ENCODE measurements at regions of chr15 and their contacts with region 1.

Region 1: DNA sequence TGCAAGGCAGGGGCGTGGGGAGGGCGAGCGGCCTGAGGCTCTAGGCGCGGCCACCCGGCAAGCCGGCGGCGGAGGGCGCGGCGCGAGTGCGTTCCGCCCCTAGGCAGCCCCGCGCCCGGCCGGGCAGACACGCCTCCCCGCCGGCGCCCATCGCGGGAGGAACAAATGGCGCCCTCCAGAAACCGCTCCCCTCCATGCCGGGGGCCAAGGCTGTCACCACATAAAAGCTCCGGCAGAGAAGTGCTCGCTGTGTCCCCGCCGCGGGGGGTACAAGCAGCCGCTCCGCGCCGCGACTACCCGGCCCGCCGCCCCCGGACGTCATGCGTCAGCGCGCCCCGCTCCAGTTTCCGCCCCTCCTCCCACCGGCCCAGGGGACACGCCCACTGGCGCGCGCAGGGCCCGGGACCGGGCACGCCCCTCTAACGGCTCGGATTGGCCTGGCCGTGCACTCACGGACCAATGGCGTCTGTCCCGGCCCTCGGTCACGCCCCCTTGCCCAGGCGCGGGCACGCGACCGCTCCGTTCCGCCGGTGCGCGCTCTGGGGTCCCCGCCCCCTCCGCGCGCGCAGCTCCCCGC is 391 bp upstream of the KLF13 start:
- DNase-seq: peak; percentile 97 to 100 (median 100)
- H3K4me3 ChIP-seq: peak overlapping the region in 1 of 2 donors; percentile 77
- H3K4me3 Mint-ChIP-seq: peak overlapping the region; percentile 53 to 90 (median 78)
- H3K27ac ChIP-seq: peak overlapping the region; percentile 92
- H3K27ac Mint-ChIP-seq: peak overlapping the region; percentile 64 to 92 (median 83)
- H3K4me1 ChIP-seq: peaks cover 43% of the 10 kb centered on the region
- H3K4me1 Mint-ChIP-seq: peaks cover 26 to 48% (median 37%) of the 10 kb centered on the region in 4 donors
- H3K27me3 ChIP-seq: no peaks in the 10 kb centered on the region
- H3K27me3 Mint-ChIP-seq: no peaks in the 10 kb centered on the region

Region 2: DNA sequence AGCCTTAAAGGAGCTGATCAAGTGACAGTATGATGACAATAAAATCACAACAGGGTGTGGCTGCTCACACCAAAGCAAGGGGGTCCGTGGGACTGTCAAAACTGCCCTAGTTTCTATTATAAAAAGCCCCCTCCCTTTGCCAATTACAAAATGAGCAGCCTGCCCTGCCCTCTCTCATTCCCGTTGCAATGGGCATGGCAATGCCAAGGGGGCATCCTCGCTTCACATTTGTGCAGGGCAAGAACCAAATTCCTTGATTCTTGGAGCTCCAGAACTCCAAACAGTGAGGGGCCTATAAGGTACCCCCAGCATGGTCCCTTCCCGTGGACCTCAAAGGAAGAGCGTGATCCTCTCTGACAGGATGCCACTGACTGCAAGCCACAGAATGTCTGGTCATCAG is 119.9 kb before region 1 on chr15:
- CTCF ChIA-PET with region 1: interaction called, 10 read pairs
- POLR2A ChIA-PET with region 1: interaction called, 14 read pairs
- intact Hi-C with region 1: loop called (anchors 5 kb)
- DNase-seq: no peak
- H3K4me3 ChIP-seq: no peak overlapping the region
- H3K4me3 Mint-ChIP-seq: no peak overlapping the region
- H3K27ac ChIP-seq: no peak overlapping the region
- H3K27ac Mint-ChIP-seq: no peak overlapping the region
- H3K4me1 ChIP-seq: peaks cover 36% of the 10 kb centered on the region
- H3K4me1 Mint-ChIP-seq: peaks cover 14 to 34% (median 22%) of the 10 kb centered on the region in 4 donors
- H3K27me3 ChIP-seq: no peaks in the 10 kb centered on the region
- H3K27me3 Mint-ChIP-seq: no peaks in the 10 kb centered on the region

Region 3: GRCh38 chr15:31265871-31266711 is 60.2 kb before region 1 on chr15:
- CTCF ChIA-PET with region 1: interaction called, 10 read pairs
- POLR2A ChIA-PET with region 1: interaction called, 242 read pairs
- intact Hi-C with region 1: loop called (anchors 1 kb)
- DNase-seq: peak; percentile 76 to 84 (median 80)
- H3K4me3 ChIP-seq: peak overlapping the region in 1 of 2 donors; percentile 20
- H3K4me3 Mint-ChIP-seq: peak overlapping the region; percentile 1 to 86 (median 78)
- H3K27ac ChIP-seq: peak overlapping the region; percentile 70
- H3K27ac Mint-ChIP-seq: peak overlapping the region; percentile 70 to 99 (median 96)
- H3K4me1 ChIP-seq: peaks cover 75% of the 10 kb centered on the region
- H3K4me1 Mint-ChIP-seq: peaks cover 62 to 83% (median 74%) of the 10 kb centered on the region in 4 donors
- H3K27me3 ChIP-seq: no peaks in the 10 kb centered on the region
- H3K27me3 Mint-ChIP-seq: no peaks in the 10 kb centered on the region

Region 4: GRCh38 chr15:31344823-31345605 is 18.8 kb after region 1 on chr15:
- CTCF ChIA-PET with region 1: interaction called, 5 read pairs
- POLR2A ChIA-PET with region 1: interaction called, 528 read pairs
- intact Hi-C with region 1: loop called (anchors 1 kb)
- DNase-seq: peak in 1 of 5 donors; percentile 47
- H3K4me3 ChIP-seq: peak overlapping the region; percentile 54 to 60
- H3K4me3 Mint-ChIP-seq: peak overlapping the region; percentile 83 to 95 (median 90)
- H3K27ac ChIP-seq: peak overlapping the region; percentile 74
- H3K27ac Mint-ChIP-seq: peak overlapping the region; percentile 84 to 99 (median 98)
- H3K4me1 ChIP-seq: peaks cover 100% of the 10 kb centered on the region
- H3K4me1 Mint-ChIP-seq: peaks cover 70 to 100% (median 91%) of the 10 kb centered on the region in 4 donors
- H3K27me3 ChIP-seq: no peaks in the 10 kb centered on the region
- H3K27me3 Mint-ChIP-seq: no peaks in the 10 kb centered on the region

Region 5: DNA sequence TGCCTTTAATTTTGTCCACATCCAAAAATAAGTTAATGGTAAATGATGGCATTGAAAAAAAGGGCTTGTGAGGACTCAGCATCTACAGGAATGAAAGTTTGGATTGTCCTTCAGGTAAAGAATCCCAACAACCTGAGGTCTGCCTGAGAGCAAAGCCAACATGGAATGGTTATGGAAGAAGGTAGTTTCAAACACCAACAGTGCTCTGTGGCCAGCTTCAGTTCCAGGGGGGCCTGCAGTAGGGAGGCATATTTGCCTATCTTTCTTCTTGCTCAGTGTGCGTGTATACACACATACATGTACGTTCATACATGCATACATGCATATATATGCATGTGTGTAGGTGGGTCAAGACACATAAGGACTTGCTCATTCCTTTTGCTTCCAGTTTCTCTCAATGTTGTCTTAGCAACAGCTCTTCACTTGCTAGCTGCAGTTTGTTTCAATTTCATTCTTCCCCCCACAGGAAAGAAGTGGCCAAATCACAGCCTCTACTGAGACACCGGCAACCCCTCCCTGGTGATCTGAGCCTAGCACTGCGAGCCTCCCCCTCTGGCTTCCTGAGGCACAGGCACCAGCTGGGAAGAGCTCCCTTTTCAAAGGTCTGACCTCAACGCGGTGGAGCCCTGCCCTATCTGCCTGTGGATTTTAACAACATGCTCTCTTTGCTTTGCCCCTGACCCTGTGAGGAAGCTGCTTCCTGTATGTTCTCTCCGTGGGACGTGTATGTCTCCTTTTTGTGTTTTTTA is 146.6 kb after region 1 on chr15:
- CTCF ChIA-PET with region 1: interaction called, 5 read pairs
- POLR2A ChIA-PET with region 1: interaction called, 34 read pairs
- intact Hi-C with region 1: no loop called
- DNase-seq: peak; percentile 56 to 69 (median 62)
- H3K4me3 ChIP-seq: peak overlapping the region; percentile 12 to 41
- H3K4me3 Mint-ChIP-seq: peak overlapping the region; percentile 60 to 89 (median 79)
- H3K27ac ChIP-seq: peak overlapping the region; percentile 51
- H3K27ac Mint-ChIP-seq: peak overlapping the region; percentile 80 to 96 (median 94)
- H3K4me1 ChIP-seq: peaks cover 42% of the 10 kb centered on the region
- H3K4me1 Mint-ChIP-seq: peaks cover 31 to 57% (median 47%) of the 10 kb centered on the region in 4 donors
- H3K27me3 ChIP-seq: no peaks in the 10 kb centered on the region
- H3K27me3 Mint-ChIP-seq: no peaks in the 10 kb centered on the region